PC-3 (cell line): ENCODE measurements at regions of chr7 and their contacts with region 1.

Region 1: GRCh38 chr7:74656837-74657691 is 454 bp upstream of the GTF2I start:
- DNase-seq: peak; percentile 95
- ATAC-seq: peak; percentile 76
- H3K4me3 ChIP-seq: peak overlapping the region; percentile 95
- H3K27ac ChIP-seq: peak overlapping the region; percentile 82
- H3K4me1 ChIP-seq: peaks cover 45% of the 10 kb centered on the region
- H3K27me3 ChIP-seq: no peaks in the 10 kb centered on the region
- CTCF ChIP-seq: no peak

Region 2: GRCh38 chr7:74466196-74466813 is 190.8 kb before region 1 on chr7:
- CTCF ChIA-PET with region 1: no interaction called
- POLR2A ChIA-PET with region 1: no interaction called
- intact Hi-C with region 1: no loop called
- DNase-seq: no peak
- ATAC-seq: no peak
- H3K4me3 ChIP-seq: no peak overlapping the region
- H3K27ac ChIP-seq: no peak overlapping the region
- H3K4me1 ChIP-seq: peaks cover 6% of the 10 kb centered on the region; the same call in 1 of the 2 replicates
- H3K27me3 ChIP-seq: no peaks in the 10 kb centered on the region
- CTCF ChIP-seq: no peak

Region 3: DNA sequence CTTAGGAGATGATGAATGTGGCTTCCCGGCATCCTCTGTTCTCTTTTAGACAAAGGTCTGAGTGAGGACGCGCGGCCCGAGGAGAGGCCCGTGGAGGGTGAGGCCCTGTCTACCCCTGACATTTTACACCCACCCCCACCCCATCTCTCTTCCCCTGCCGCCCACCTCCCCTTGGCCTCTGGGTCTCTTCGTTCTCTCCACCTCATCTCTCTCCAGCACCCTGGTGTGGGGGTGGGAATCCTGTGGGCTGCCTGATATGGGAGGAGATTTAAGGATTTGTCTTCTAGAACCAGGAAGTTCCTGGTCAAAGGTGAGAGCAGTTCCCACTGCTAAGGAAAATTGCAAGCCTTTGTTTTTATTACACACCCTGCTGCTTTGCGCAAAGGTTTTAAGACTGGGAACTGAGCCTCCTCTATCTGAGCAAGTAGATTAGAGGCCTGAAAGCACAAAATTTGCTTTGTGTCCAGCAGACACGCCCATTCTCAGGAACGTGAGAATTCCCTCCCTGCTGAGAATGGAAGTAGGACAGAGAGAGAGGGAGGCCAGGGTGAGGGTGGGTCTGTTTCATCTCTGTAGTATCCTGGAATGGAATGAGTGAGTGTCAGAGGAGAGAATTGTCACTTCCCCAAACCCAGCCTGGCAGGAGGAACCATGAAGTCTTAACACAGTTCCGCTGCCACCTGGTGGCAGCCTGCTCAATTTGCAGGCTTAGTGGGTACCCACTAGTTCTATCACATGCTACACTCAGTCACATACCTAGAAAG is 112.2 kb before region 1 on chr7:
- CTCF ChIA-PET with region 1: no interaction called
- POLR2A ChIA-PET with region 1: no interaction called
- intact Hi-C with region 1: no loop called
- DNase-seq: peak; percentile 79
- ATAC-seq: peak; percentile 84
- H3K4me3 ChIP-seq: no peak overlapping the region
- H3K27ac ChIP-seq: no peak overlapping the region; the same call in 1 of the 2 replicates
- H3K4me1 ChIP-seq: no peaks in the 10 kb centered on the region
- H3K27me3 ChIP-seq: no peaks in the 10 kb centered on the region
- CTCF ChIP-seq: peak; percentile 74

Region 4: DNA sequence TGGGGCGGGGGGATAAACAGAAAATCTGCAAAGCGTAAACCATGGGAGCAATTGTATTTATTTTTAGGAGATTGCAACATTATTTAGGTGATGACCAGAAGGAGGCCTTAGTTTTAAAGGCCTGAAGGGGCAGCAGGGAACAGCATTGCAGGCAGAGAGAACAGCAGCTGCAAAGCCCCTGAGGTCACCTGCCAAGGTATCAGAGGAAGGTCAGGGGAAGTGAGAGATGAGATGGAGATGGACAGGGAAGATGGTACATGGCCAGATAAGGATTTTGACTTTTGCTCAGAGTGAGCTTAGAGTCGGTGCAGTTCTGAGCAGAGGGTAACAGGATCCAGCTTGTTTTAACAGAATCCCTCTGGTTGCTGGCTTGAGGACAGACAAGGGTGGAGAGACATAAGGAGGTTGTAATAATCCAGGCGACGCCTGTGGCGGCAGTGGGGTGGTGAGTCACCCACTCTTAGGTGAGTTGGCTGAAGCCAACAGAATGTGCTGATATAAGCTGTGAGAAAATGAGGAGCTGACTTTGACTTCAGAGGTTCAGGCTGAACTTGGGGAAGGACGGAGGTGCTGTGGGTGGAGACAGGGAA is 81.8 kb before region 1 on chr7:
- CTCF ChIA-PET with region 1: no interaction called
- POLR2A ChIA-PET with region 1: interaction called, 19 read pairs
- intact Hi-C with region 1: no loop called
- DNase-seq: peak; percentile 59
- ATAC-seq: peak; percentile 92
- H3K4me3 ChIP-seq: no peak overlapping the region
- H3K27ac ChIP-seq: no peak overlapping the region
- H3K4me1 ChIP-seq: peaks cover 8% of the 10 kb centered on the region
- H3K27me3 ChIP-seq: no peaks in the 10 kb centered on the region
- CTCF ChIP-seq: no peak

Region 5: GRCh38 chr7:74625446-74625845 is 31.6 kb before region 1 on chr7:
- CTCF ChIA-PET with region 1: no interaction called
- POLR2A ChIA-PET with region 1: interaction called, 20 read pairs
- intact Hi-C with region 1: loop called (anchors 1 kb)
- DNase-seq: peak; percentile 55
- ATAC-seq: peak; percentile 50; the same call in 1 of the 2 replicates
- H3K4me3 ChIP-seq: no peak overlapping the region
- H3K27ac ChIP-seq: no peak overlapping the region
- H3K4me1 ChIP-seq: no peaks in the 10 kb centered on the region
- H3K27me3 ChIP-seq: no peaks in the 10 kb centered on the region
- CTCF ChIP-seq: peak; percentile 41; the same call in 1 of the 2 replicates

Region 6: DNA sequence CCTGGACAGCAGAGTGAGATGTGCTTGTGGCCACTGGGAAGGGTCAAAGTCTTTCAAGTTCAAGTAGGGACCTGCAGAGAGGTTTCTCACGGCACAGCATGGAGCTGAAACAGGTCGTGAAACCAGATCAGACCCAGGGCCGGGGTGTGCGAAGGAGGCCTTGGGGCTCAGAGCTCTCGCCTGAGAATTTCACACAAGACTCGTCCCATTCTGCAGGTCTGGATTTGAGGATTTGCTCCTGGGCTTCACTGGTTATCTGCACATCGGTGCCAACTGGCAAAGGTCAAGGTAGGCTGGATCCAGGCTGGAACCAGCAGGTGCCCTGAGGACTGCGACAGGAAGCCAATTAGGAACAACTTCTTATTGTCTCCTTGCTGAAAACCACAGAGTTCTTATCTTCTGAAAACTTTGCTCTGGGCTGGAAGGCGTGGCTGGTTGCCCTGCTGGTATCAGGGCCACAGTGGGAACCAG is 23.6 kb before region 1 on chr7:
- CTCF ChIA-PET with region 1: no interaction called
- POLR2A ChIA-PET with region 1: interaction called, 20 read pairs
- intact Hi-C with region 1: loop called (anchors 2 kb)
- DNase-seq: no peak
- ATAC-seq: no peak
- H3K4me3 ChIP-seq: no peak overlapping the region
- H3K27ac ChIP-seq: no peak overlapping the region
- H3K4me1 ChIP-seq: peaks cover 20% of the 10 kb centered on the region
- H3K27me3 ChIP-seq: no peaks in the 10 kb centered on the region
- CTCF ChIP-seq: no peak